Activated T-helper 1 cell treated with anti-CD3 and anti-CD28 coated beads, Interleukin-12 subunit alpha, Interleukin-12 subunit beta, Interleukin-2, Interleukin-4 antibody, amounts not matched to agents 30 ng/mL and 10 ng/mL and 1 ng/mL, durations not matched to agents 14 hours and 24 hours and 36 hours (primary cell): ENCODE measurements at regions of chr3 and their contacts with region 1.

Region 1: DNA sequence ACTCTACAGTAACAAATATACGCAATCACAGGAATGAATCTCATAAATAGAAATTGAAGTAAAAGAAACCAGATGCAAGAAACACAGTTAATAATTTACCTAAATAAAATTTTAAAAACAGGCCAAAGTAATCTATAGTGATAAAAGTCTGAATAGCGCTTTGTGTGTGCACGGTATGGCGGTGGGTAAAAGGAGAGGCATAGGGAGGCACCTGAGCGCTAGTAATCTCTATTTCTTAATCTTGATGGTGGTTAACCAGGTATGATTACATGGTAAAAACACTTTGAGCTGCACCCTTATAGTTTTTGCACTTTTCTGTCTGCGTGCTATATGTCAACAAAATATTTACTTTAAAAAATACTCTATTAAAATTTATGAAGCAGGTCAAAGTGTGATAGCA is 198.1 kb upstream of the SATB1 start:
- DNase-seq: no peak
- H3K4me3 Mint-ChIP-seq: no peak overlapping the region
- H3K27ac Mint-ChIP-seq: no peak overlapping the region
- H3K4me1 Mint-ChIP-seq: peaks cover 11% of the 10 kb centered on the region
- H3K27me3 Mint-ChIP-seq: no peaks in the 10 kb centered on the region

Region 2: GRCh38 chr3:18580268-18580667 is 43.0 kb before region 1 on chr3:
- intact Hi-C with region 1: loop called (anchors 5 kb)
- DNase-seq: no peak
- H3K4me3 Mint-ChIP-seq: no peak overlapping the region
- H3K27ac Mint-ChIP-seq: no peak overlapping the region
- H3K4me1 Mint-ChIP-seq: peaks cover 4% of the 10 kb centered on the region
- H3K27me3 Mint-ChIP-seq: no peaks in the 10 kb centered on the region